Activated CD8-positive, alpha-beta T cell treated with anti-CD3 and anti-CD28 coated beads, Interleukin-2, amount 10 ng/mL, durations not matched to agents 7 days and 5 days (primary cell): ENCODE measurements at regions of chr3 and their contacts with region 1.

Region 1: GRCh38 chr3:112013058-112013783 is 14.5 kb downstream of the TAGLN3 start:
- DNase-seq: peak; percentile 74
- ATAC-seq: peak; percentile 88
- H3K4me3 Mint-ChIP-seq: no peak overlapping the region
- H3K27ac Mint-ChIP-seq: peak overlapping the region; percentile 53
- H3K4me1 Mint-ChIP-seq: peaks cover 13% of the 10 kb centered on the region
- H3K27me3 Mint-ChIP-seq: no peaks in the 10 kb centered on the region

Region 2: DNA sequence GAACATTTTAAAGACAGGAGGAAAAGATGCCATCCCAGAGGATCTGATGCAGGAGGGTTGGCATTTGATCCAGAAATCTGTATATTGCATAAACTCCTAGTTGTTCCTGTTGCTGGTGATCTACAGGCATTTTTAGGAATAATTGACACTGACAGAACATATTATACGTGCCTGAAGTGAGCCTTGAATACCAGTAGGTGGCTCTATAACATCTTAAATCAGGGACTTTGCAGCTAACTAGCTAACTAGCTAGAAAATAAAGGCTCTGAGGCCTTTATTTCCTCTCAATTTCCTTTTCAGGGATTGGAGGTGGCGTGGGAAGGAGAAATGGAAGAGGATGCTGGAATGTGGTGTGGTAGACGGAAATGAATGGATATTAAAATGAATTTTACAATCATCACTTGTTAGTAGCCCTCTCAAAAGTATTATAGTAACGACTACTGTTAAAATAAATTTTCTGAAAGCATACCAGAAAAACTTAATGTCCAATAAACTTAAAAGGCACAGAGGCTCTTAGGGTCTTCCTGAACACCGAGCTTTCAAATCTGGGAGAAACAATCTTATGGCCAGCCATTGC is 344.2 kb before region 1 on chr3:
- CTCF ChIA-PET with region 1: interaction called, 21 read pairs
- POLR2A ChIA-PET with region 1: no interaction called
- DNase-seq: no peak
- ATAC-seq: peak; percentile 32
- H3K4me3 Mint-ChIP-seq: no peak overlapping the region
- H3K27ac Mint-ChIP-seq: peak overlapping the region; percentile 75
- H3K4me1 Mint-ChIP-seq: peaks cover 84% of the 10 kb centered on the region
- H3K27me3 Mint-ChIP-seq: no peaks in the 10 kb centered on the region

Region 3: GRCh38 chr3:111859974-111860859 is 153.0 kb before region 1 on chr3:
- CTCF ChIA-PET with region 1: interaction called, 21 read pairs
- POLR2A ChIA-PET with region 1: no interaction called
- DNase-seq: peak; percentile 78
- ATAC-seq: peak; percentile 73
- H3K4me3 Mint-ChIP-seq: peak overlapping the region; percentile 86
- H3K27ac Mint-ChIP-seq: peak overlapping the region; percentile 77
- H3K4me1 Mint-ChIP-seq: peaks cover 11% of the 10 kb centered on the region
- H3K27me3 Mint-ChIP-seq: peaks cover 45% of the 10 kb centered on the region

Region 4: DNA sequence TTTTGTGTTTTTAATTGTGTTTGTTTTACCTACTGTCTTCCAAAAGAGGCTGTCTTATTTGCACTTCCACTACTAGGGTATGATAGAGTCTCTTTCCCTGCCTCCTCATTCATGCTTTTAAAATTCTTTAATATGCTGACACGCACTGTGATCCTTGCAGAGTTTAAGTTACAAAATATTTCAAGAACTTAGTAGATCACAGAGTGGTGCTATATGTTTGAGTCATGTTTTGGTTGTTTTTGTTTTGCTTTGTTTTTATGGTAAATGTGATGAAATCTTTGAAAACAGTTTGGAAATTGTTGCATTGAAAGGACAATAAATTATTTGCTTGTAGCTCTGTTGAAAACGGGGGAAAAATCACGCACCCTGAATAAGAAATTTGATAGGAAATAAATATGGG is 40.3 kb before region 1 on chr3:
- CTCF ChIA-PET with region 1: interaction called, 48 read pairs
- POLR2A ChIA-PET with region 1: interaction called, 3 read pairs
- DNase-seq: no peak
- ATAC-seq: no peak
- H3K4me3 Mint-ChIP-seq: no peak overlapping the region
- H3K27ac Mint-ChIP-seq: no peak overlapping the region
- H3K4me1 Mint-ChIP-seq: no peaks in the 10 kb centered on the region
- H3K27me3 Mint-ChIP-seq: peaks cover 10% of the 10 kb centered on the region

Region 5: GRCh38 chr3:111989061-111989678 is 24.1 kb before region 1 on chr3:
- CTCF ChIA-PET with region 1: interaction called, 351 read pairs
- POLR2A ChIA-PET with region 1: interaction called, 3 read pairs
- DNase-seq: no peak
- ATAC-seq: peak; percentile 88
- H3K4me3 Mint-ChIP-seq: no peak overlapping the region
- H3K27ac Mint-ChIP-seq: no peak overlapping the region
- H3K4me1 Mint-ChIP-seq: peaks cover 28% of the 10 kb centered on the region
- H3K27me3 Mint-ChIP-seq: no peaks in the 10 kb centered on the region

Region 6: DNA sequence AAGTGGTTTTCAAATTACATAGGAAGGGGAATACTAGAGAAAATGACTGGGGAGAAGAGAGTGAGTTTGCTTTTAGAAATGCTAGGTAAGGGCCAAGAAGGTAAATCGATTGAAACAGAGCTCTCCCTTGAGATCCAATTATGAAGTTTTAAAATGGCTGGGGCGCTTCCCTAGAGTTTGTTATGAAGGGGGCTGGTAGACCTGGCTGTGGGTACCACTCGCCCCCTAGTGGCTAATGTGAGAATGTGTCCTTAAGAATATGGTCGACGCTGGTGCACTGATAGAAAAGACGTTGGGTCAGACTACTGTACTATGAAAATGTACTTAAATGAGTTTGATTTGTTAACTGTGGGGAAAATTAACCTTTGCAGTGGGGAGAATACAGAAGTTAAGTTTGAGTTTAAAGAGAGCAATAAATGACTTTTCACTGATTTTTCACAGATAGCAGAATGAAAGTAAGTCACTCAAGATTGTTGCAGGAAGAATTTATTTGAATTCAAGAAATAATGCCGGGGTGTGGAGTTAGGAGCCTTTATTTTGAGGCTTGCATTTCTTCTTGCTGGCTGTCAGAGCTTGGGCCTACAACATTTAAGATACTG is 30.5 kb after region 1 on chr3:
- CTCF ChIA-PET with region 1: interaction called, 52 read pairs
- POLR2A ChIA-PET with region 1: no interaction called
- DNase-seq: peak; percentile 70
- ATAC-seq: peak; percentile 93
- H3K4me3 Mint-ChIP-seq: no peak overlapping the region
- H3K27ac Mint-ChIP-seq: no peak overlapping the region
- H3K4me1 Mint-ChIP-seq: peaks cover 3% of the 10 kb centered on the region
- H3K27me3 Mint-ChIP-seq: peaks cover 1% of the 10 kb centered on the region